RWPE1 (cell line): ENCODE measurements at regions of chr5 and their contacts with region 1.

Region 1: GRCh38 chr5:147348046-147348445 is 113.2 kb downstream of the STK32A start:
- DNase-seq: peak; percentile 10
- H3K27ac ChIP-seq: no peak overlapping the region
- CTCF ChIP-seq: no peak

Region 2: GRCh38 chr5:146188358-146188757 is 1159.7 kb before region 1 on chr5:
- CTCF ChIA-PET with region 1: no interaction called
- POLR2A ChIA-PET with region 1: interaction called, 11 read pairs
- DNase-seq: peak; percentile 73
- H3K27ac ChIP-seq: no peak overlapping the region
- CTCF ChIP-seq: no peak